Ascending aorta (tissue), 2 donors: ENCODE measurements at regions of chr12 and their contacts with region 1.

Region 1: DNA sequence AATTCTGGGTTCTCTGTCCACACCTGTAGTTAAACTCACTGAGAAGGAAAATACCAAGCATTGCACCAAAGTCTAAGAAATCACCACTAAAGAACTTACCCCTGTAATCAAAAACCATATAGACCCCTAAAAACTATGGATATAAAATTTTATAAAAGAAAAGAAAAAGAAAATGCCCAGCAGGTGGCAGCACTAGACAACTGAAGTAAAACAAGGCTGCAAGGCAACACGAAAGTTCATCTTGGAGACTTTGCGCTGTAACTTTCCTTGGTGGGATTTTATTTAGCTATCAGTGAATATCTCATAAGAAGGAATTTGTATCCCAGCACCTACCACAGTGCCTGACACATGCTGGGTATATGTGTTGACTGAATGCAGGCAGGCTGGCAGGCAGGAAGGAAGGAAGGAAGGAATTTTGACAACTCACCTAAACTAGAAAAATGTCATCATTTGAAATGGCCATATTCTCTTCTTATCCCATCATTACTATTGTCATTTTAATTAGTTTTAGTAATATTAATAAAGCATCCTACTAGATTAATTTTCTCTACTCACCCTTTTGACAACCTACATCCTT is 68.2 kb upstream of the ETV6 start:
- DNase-seq: peak in 1 of 2 donors; percentile 81
- H3K4me3 ChIP-seq: no peak overlapping the region
- H3K27ac ChIP-seq: peak overlapping the region; percentile 69 to 82
- H3K4me1 ChIP-seq: peaks cover 6 to 31% of the 10 kb centered on the region in 2 donors
- H3K27me3 ChIP-seq: no peaks in the 10 kb centered on the region
- CTCF ChIP-seq: peak; percentile 55 to 61 (median 59)

Region 2: DNA sequence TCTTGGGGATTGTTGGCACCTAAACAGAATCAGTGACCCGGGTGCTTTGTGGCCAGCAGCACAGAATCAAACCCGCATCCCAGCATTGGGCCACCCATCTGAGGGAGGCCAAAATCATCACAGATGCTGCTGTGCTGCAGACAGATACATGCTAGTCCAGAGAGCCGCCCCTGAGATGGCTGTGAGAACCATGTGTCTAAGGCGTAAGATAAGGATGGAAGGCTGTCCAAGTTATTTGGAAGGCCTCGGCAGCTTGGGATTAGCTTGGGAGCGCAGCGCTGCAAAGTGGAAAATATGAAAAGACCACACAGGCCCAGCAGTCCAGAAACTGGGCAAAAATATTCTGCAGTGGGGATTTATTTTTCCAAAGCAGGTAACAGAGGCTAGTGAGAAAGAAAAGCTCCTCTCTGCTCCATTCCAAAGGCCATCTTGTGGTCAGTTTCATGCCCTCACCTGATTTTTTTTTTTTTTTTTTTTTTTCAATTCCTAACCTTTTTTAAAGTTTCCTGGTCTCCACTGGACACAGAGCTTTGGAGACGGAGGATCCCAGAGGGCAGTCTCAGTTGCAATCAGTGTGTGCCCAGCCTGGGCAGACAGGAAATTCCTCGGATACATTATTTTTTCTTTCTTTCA is 310.6 kb after region 1 on chr12:
- intact Hi-C with region 1: loop called (anchors 5 kb)
- DNase-seq: no peak
- H3K4me3 ChIP-seq: no peak overlapping the region
- H3K27ac ChIP-seq: peak overlapping the region; percentile 69 to 73
- H3K4me1 ChIP-seq: peaks cover 15 to 21% of the 10 kb centered on the region in 2 donors
- H3K27me3 ChIP-seq: no peaks in the 10 kb centered on the region
- CTCF ChIP-seq: peak in 2 of 3 experiments; percentile 25 to 33

Region 3: DNA sequence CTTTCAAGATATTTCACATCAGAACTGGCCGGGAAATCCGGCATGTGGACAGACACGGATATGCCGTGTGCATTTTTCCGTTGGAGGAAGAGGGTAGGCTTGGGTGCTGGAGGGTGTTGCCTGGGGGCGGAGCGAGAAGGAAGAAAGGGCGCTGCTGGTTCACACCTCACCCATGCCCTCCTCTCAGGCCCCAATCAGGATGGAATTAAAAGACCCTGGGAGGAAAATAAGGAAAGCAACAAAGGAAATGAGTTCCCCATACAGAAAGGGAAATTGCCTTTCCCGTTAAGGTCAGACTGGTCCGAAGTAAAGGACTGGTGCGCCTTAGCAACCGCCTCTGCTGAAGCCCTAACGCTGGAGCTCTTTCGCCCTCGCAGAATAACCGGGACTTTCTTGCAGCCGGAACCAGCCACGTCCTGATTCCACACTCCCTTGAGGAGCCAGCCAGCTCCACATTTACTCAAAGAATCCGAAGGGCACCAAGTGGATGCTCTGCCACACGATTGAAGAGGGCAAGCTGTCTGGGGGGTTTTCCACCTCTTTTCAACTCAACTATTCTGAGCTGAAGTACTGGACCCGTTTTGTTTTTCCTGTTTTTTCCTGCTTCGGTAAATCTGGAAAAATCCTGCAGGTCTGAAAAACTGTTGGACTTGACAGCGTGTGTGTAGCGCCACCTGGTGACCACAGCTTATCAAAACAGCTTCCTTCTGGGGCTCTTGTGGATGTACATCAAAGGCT is 451.8 kb after region 1 on chr12:
- intact Hi-C with region 1: loop called (anchors 1 kb)
- DNase-seq: peak in 1 of 2 donors; percentile 86
- H3K4me3 ChIP-seq: peak overlapping the region; percentile 53 to 60
- H3K27ac ChIP-seq: peak overlapping the region; percentile 69 to 71
- H3K4me1 ChIP-seq: peaks cover 0 to 6% of the 10 kb centered on the region in 2 donors
- H3K27me3 ChIP-seq: no peaks in the 10 kb centered on the region
- CTCF ChIP-seq: peak; percentile 82 to 90 (median 88)

Region 4: DNA sequence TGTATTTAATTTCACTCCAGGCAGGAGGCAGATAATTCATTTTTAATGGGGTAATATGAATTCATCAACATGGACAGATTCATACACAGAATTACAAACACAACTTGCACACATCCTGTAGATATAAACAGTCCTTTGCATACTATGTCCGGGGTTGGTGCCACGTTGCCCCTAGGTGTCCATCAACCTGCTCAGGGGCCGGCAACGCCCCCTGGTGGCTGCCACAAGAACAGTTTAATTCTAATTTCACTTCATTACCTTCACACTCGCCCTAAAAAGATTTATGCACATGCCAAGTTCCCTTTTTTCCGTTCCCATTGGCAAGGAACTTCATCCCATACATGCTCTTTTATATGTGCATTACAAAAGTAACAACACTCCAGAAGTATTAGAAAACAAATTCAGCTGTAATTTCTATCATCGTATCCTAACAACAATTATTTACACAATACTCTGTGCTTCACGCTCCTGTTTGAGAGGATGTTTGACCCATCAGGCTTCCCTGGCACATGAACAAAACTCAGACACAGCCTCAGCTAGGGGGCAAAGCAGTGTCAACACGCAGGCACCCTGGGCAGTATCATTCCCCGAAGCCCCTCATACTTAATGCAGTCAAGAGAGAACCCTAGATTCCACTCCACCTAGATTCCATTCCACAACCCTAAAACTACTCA is 753.2 kb after region 1 on chr12:
- intact Hi-C with region 1: loop called (anchors 10 kb)
- DNase-seq: peak in 1 of 2 donors; percentile 56
- H3K4me3 ChIP-seq: no peak overlapping the region
- H3K27ac ChIP-seq: peak overlapping the region; percentile 24 to 51
- H3K4me1 ChIP-seq: peaks cover 9 to 33% of the 10 kb centered on the region in 2 donors
- H3K27me3 ChIP-seq: no peaks in the 10 kb centered on the region
- CTCF ChIP-seq: peak; percentile 47 to 67 (median 60)